ENCODE measurements at regions of chrX and their contacts with region 1.

Region 1: GRCh38 chrX:7019545-7019944 is 128.0 kb upstream of the STS start:
- DNase-seq: no peak
- ATAC-seq: no peak
- H3K4me3 ChIP-seq: no peak overlapping the region
- H3K27ac ChIP-seq: no peak overlapping the region
- H3K4me1 ChIP-seq: no peaks in the 10 kb centered on the region
- H3K27me3 ChIP-seq: no peaks in the 10 kb centered on the region
- CTCF ChIP-seq: no peak
- POLR2A ChIP-seq: no peak

Region 2: GRCh38 chrX:6678313-6678712 is 341.2 kb before region 1 on chrX:
- intact Hi-C with region 1: no loop called
- DNase-seq: no peak
- ATAC-seq: no peak
- H3K4me3 ChIP-seq: no peak overlapping the region
- H3K27ac ChIP-seq: no peak overlapping the region
- H3K4me1 ChIP-seq: no peaks in the 10 kb centered on the region
- H3K27me3 ChIP-seq: no peaks in the 10 kb centered on the region
- CTCF ChIP-seq: no peak
- POLR2A ChIP-seq: no peak

Region 3: DNA sequence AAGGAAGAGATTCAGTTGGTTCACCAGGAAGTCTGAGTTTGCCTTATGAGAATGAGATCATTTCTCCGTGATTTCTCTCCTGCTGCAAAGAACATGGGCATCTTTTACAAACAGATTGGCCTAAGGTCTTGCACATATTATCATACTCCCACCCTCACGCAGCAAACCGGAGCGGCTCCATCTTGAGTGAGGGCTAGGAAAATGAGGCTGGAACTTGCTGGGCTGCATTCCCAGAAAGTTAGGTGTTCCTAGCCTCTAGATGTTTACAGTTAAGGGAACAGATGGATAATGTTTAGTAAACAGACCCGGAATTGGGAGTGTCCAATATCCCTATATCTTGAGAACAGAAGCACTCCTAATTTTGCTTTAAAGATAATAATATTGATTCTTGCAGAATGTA is 236.7 kb before region 1 on chrX:
- intact Hi-C with region 1: no loop called
- DNase-seq: no peak
- ATAC-seq: no peak
- H3K4me3 ChIP-seq: no peak overlapping the region
- H3K27ac ChIP-seq: no peak overlapping the region
- H3K4me1 ChIP-seq: no peaks in the 10 kb centered on the region
- H3K27me3 ChIP-seq: no peaks in the 10 kb centered on the region
- CTCF ChIP-seq: no peak
- POLR2A ChIP-seq: no peak

Region 4: DNA sequence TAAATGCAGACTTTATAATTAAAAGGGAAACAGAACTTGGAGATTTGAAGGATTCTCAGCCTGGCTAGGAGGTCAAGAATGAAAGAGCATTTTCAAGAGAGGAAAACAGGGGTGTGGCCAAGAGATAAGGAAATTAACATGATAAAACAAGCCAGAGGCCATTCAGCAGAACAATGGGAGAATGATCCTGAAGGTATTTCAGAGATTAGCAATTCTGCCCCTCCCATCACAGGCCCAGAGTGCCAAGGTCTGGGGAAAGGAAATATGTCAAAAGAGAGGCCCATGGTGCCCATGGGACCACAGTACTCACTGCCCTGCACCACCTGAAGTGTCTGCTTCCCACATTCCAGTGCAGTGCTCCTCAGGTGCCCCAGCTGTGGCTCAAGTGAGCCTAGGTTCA is 60.5 kb before region 1 on chrX:
- intact Hi-C with region 1: loop called in 1 of 10 experiments (anchors 10 kb)
- DNase-seq: no peak
- ATAC-seq: no peak
- H3K4me3 ChIP-seq: no peak overlapping the region
- H3K27ac ChIP-seq: no peak overlapping the region
- H3K4me1 ChIP-seq: no peaks in the 10 kb centered on the region
- H3K27me3 ChIP-seq: no peaks in the 10 kb centered on the region
- CTCF ChIP-seq: no peak
- POLR2A ChIP-seq: no peak

Region 5: DNA sequence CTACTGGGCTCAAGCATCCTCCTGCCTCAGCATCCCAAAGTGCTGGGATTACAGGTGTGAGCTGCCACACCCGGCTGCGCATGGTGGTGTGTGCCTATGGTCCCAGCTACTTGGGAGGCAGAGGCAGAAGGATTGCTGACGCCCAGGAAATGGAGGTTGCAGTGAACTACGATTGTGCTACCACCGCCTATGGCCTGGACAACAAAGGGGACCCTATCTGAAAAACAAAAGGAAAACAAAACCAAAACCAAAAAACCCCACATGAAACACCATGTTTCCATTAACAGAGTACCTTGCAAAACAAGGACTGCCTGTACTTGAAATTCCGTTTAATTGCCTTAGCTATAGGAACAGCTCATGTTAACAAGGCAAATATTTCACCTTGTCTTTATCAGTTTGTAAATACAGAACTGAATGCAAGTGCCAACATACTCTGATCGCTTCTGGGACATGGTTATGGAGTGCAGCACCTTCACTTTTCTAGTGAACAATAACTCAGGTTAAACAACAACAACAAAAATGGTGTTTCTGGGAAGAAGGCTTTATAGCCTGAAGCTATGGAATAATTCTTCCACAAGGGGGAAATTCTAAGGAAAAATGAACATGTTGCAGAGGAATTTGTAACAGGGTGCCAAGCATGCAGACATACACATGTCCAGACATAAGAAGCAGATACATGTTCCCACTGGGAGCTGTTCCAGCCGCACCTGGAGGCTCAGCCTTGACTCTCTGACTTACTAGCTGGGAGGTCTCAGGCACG is 54.8 kb after region 1 on chrX:
- intact Hi-C with region 1: loop called in 1 of 10 experiments (anchors 10 kb)
- DNase-seq: no peak
- ATAC-seq: no peak
- H3K4me3 ChIP-seq: no peak overlapping the region
- H3K27ac ChIP-seq: no peak overlapping the region
- H3K4me1 ChIP-seq: no peaks in the 10 kb centered on the region
- H3K27me3 ChIP-seq: no peaks in the 10 kb centered on the region
- CTCF ChIP-seq: no peak
- POLR2A ChIP-seq: no peak

Region 6: GRCh38 chrX:7272346-7272745 is 252.8 kb after region 1 on chrX:
- intact Hi-C with region 1: no loop called
- DNase-seq: no peak
- ATAC-seq: no peak
- H3K4me3 ChIP-seq: no peak overlapping the region
- H3K27ac ChIP-seq: no peak overlapping the region
- H3K4me1 ChIP-seq: peaks cover 0 to 11% (median 0%) of the 10 kb centered on the region in 12 donors
- H3K27me3 ChIP-seq: no peaks in the 10 kb centered on the region
- CTCF ChIP-seq: no peak
- POLR2A ChIP-seq: no peak

Measured in heart left ventricle (tissue), 16 donors.